HepG2 (cell line): ENCODE measurements at regions of chr12 and their contacts with region 1.

Region 1: DNA sequence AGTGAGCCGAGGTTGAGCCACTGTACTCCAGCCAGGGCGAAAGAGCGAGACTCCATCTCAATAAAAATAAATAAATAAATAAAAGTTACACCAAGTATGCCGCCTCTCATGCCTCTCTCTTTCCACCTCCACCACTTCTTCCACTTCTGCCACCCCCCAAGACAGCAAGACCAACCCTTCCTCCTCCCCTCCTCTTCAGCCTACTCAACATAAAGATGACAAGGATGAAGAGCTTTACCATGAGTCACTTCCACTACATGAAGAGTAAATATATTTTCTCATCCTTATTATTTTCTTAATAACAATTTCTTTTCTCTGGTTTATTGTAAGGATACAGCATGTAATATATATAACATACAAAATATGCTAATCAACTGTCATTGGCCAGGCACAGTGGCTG is 3.6 kb upstream of the TMED2 start:
- DNase-seq: no peak
- ATAC-seq: no peak
- H3K4me3 ChIP-seq: no peak overlapping the region
- H3K27ac ChIP-seq: no peak overlapping the region
- H3K4me1 ChIP-seq: peaks cover 18% of the 10 kb centered on the region
- H3K27me3 ChIP-seq: no peaks in the 10 kb centered on the region
- CTCF ChIP-seq: no peak
- EP300 ChIP-seq: no peak
- POLR2A ChIP-seq: no peak
- RAD21 ChIP-seq: no peak

Region 2: GRCh38 chr12:123468562-123469185 is 112.1 kb before region 1 on chr12:
- CTCF ChIA-PET with region 1: no interaction called
- POLR2A ChIA-PET with region 1: no interaction called
- in situ Hi-C with region 1: no loop called
- intact Hi-C with region 1: loop called (anchors 1 kb)
- DNase-seq: no peak
- ATAC-seq: peak; percentile 25; the same call in 2 of the 3 replicates
- H3K4me3 ChIP-seq: no peak overlapping the region
- H3K27ac ChIP-seq: no peak overlapping the region
- H3K4me1 ChIP-seq: peaks cover 46% of the 10 kb centered on the region
- H3K27me3 ChIP-seq: no peaks in the 10 kb centered on the region
- CTCF ChIP-seq: peak; percentile 38
- EP300 ChIP-seq: no peak
- POLR2A ChIP-seq: no peak
- RAD21 ChIP-seq: no peak

Region 3: DNA sequence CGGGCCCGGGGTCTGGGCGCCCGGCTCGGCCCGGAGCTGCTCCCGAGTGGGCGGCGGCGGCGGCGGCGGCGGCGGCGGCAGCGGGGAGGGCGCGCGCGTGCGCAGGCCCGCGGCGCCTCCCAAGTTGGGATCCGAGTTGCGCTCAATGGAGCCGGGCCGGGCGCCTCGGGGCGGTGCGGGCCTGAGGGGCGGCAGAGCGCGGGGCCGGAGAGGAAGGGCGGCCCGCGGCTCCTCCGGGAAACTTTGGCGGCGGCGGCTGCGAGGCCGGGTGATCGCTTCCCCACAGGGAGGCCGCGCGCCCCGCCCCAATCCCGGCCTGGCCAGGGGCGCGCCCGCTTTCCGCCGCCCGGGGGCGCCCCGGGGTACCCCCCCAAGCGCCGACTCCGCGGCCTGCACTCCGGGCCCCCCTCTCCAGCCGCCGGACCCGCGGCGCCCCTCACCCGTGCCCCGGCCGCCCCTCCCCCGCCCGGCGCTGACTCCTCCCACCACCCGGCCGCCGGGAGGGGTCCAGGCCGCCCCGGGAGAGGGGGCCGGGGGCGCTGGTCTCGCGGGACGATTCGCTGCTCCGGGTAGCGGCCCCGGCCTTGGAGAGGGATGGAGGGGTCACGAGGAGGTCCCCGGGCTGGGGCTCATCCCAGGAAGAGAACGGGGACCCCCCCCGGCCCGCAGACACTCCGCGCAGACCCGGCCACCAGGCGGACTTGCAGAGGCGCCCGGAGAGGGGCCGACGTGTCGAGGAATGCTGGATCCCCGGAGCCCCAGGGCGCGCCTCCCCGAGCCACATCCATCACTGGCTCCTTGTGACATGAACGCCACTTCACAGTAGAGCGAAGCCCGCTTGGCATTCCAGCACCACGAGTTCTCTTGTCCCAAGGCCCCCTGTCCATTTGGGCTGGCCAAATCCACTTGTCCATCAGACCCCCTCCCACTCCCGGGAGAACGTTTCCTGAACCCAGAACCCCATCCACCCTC is 46.8 kb before region 1 on chr12 and contains the start of gene RILPL1:
- CTCF ChIA-PET with region 1: interaction called, 9 read pairs
- POLR2A ChIA-PET with region 1: interaction called, 4 read pairs
- in situ Hi-C with region 1: loop called (anchors 5 kb)
- intact Hi-C with region 1: no loop called
- DNase-seq: peak; percentile 58
- ATAC-seq: peak; percentile 83
- H3K4me3 ChIP-seq: peak within 1 kb of the TSS; percentile 65 to 93 (median 85)
- H3K27ac ChIP-seq: peak within 1 kb of the TSS; percentile 76
- H3K4me1 ChIP-seq: peaks cover 44% of the 10 kb centered on the region
- H3K27me3 ChIP-seq: no peaks in the 10 kb centered on the region
- CTCF ChIP-seq: peak; percentile 2; the same call in 1 of the 2 replicates
- EP300 ChIP-seq: no peak
- POLR2A ChIP-seq: peak in 1 of 2 experiments; percentile 2; a peak in 1 of 4 replicates
- RAD21 ChIP-seq: no peak; the same call in none of the 2 replicates
- total RNA-seq, gene RILPL1: 3.9 and 5.8 TPM in 2 replicates

Region 4: DNA sequence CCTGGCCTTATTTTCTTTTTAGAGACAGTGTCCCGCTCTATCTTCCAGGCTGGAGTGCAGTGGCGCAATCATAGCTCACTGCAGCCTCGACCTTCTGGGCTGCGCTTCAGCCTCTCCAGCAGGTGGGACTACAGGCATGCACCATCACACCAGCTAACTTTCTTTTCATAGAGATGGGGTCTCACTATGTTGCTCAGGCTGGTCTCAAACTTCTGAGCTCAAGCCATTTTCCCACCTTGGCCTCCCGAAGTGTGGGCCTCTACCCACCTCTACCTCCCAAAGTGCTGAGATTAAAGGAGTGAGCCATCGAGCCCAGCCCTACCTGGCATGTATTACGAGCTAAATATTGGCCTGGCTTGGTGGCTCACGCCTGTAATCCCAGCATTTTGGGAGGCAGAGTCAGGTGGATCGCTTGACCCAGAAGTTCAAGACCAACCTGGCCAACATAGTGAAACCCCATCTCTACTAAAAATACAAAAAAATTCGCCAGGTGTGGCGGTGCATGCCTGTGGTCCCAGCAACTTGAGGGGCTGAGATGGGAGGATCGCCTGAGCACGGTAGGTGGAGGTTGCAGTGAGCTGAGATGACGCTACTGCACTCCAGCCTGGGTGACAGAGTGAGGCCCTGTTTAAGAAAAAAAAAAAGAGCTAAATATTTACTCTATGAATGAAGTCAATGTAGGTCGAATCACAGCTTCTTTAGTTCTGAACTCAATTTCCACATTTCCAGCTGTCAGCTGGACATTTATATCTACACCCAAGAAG is 39.7 kb before region 1 on chr12:
- CTCF ChIA-PET with region 1: interaction called, 9 read pairs
- POLR2A ChIA-PET with region 1: interaction called, 5 read pairs
- in situ Hi-C with region 1: no loop called
- intact Hi-C with region 1: loop called (anchors 2 kb)
- DNase-seq: peak; percentile 49
- ATAC-seq: peak; percentile 94
- H3K4me3 ChIP-seq: peak overlapping the region; percentile 48 to 62 (median 61)
- H3K27ac ChIP-seq: no peak overlapping the region
- H3K4me1 ChIP-seq: peaks cover 38% of the 10 kb centered on the region
- H3K27me3 ChIP-seq: peaks cover 0 to 5% of the 10 kb centered on the region in 2 experiments; a peak in 2 of 5 replicates
- CTCF ChIP-seq: peak; percentile 85
- EP300 ChIP-seq: no peak
- POLR2A ChIP-seq: no peak
- RAD21 ChIP-seq: peak; percentile 75